Naive thymus-derived CD8-positive, alpha-beta T cell (primary cell): ENCODE measurements at regions of chr11 and their contacts with region 1.

Region 1: DNA sequence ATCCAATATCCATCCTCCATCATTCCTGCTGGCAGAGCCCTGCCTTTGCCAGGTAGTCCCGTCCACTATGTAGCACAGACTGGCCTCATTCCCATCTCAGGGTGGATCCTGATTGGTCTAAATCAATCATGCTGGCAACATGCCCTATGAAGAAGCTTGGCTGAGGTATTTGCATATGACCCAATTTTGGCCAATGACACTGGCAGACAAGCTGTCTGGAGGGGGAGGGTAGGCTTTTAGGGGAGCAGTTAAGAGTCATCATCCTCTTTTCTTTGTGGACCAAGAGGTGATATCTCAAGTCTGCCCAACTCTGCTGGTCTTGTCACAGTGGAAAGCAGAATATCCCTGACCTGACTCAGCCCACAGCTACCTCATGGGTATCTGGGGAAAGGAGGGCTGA is 5.1 kb downstream of the CCDC89 start:
- DNase-seq: no peak
- ATAC-seq: no peak
- H3K4me3 Mint-ChIP-seq: no peak overlapping the region
- H3K27ac Mint-ChIP-seq: no peak overlapping the region
- H3K4me1 Mint-ChIP-seq: peaks cover 8 to 22% (median 14%) of the 10 kb centered on the region in 4 donors
- H3K27me3 Mint-ChIP-seq: peaks cover 0 to 3% (median 2%) of the 10 kb centered on the region in 5 donors

Region 2: DNA sequence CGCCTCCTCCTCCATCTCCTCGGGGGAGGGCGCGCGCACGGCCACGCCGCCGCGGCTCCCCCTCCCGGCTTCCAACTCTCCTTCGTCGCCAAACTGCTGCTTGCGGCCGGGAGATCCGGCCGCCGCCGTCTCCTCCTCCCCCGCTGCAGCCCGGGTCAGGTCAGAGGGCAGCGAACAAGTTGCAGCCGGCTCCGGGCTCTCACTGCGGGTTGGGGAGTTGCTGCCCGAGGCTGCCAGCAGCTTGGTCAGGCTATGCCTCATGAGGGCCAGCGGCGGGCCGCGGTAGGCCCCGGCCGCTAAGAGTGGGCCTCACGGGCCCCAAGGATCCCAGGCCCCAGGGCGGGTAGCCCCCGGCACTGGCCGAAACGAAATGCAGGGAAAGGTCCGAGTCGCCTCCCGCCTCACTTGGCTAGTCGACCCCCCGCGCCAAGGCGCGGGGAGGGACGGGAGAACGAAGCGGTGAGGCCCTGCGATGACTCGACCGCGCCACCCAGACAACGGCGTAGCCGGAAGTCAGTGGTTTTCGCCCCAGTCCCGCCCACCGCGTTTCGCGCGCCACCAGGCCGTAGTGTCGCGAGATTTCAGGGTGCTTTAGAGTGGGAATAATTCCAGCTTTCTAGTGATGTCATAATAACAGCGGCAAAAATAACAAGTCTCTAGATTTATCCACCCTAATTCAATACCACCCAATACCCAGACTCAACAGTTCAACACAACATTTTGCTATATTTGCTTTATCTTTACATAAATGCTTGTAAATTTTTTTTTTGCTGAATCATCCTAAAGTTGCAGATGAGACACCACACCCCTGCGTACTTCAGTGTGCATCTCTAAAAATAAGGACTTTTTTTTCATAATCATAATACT is 16.0 kb before region 1 on chr11 and contains the start of gene CREBZF:
- POLR2A ChIA-PET with region 1: interaction called, 17 read pairs
- DNase-seq: peak; percentile 80 to 95 (median 91)
- ATAC-seq: peak; percentile 68 to 70
- H3K4me3 Mint-ChIP-seq: peak within 1 kb of the TSS; percentile 97 to 100 (median 100)
- H3K27ac Mint-ChIP-seq: peak within 1 kb of the TSS; percentile 99 to 100 (median 100)
- H3K4me1 Mint-ChIP-seq: peaks cover 20 to 50% (median 44%) of the 10 kb centered on the region in 4 donors
- H3K27me3 Mint-ChIP-seq: no peaks in the 10 kb centered on the region
- polyA plus RNA-seq, gene CREBZF: 9.5 to 11.6 (median 11.1) TPM

Region 3: DNA sequence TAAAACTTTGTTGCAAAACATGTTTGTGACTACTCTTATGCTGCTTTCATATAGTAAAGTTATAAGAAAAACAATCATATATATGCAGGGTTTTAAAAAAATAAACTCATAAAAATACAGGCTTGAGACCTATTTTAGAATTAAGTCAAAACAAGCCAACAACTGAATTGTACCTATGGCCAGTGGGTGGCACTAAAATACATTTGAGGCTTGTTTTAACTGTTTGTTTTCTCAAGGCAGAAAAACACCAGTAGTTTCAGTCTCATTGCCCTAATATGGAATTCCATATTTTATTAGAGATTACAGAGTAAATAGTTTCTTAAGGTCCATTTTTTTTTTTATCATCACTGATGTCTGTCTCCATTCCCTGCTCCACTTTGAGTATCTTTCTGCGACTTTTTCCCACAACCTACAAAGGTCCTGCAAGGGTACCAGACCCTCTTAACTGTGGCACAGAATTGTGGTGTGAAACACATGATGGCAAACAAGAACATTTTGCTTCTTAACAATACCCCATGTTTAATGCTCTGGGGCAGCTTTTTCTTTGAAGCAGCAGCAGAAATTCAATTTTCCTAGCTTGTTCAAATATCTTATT is 13.6 kb after region 1 on chr11:
- POLR2A ChIA-PET with region 1: no interaction called
- DNase-seq: peak in 5 of 10 donors; percentile 12 to 61 (median 47)
- ATAC-seq: peak; percentile 56 to 68
- H3K4me3 Mint-ChIP-seq: no peak overlapping the region
- H3K27ac Mint-ChIP-seq: peak overlapping the region in 2 of 10 donors; percentile 24 to 39
- H3K4me1 Mint-ChIP-seq: peaks cover 3 to 12% (median 7%) of the 10 kb centered on the region in 4 donors
- H3K27me3 Mint-ChIP-seq: peaks cover 0 to 2% (median 0%) of the 10 kb centered on the region in 5 donors

Region 4: GRCh38 chr11:85779956-85780640 is 99.2 kb after region 1 on chr11:
- POLR2A ChIA-PET with region 1: no interaction called
- DNase-seq: no peak
- ATAC-seq: no peak
- H3K4me3 Mint-ChIP-seq: no peak overlapping the region
- H3K27ac Mint-ChIP-seq: peak overlapping the region in 4 of 10 donors; percentile 10 to 50 (median 34)
- H3K4me1 Mint-ChIP-seq: peaks cover 25 to 44% (median 29%) of the 10 kb centered on the region in 4 donors
- H3K27me3 Mint-ChIP-seq: no peaks in the 10 kb centered on the region